ENCODE measurements at regions of chr1 and their contacts with region 1.

Region 1: GRCh38 chr1:243748706-243749283 is 101.2 kb downstream of the AKT3 start:
- DNase-seq: peak in 7 of 9 donors; percentile 11 to 59 (median 44)
- ATAC-seq: peak; percentile 99
- H3K4me3 ChIP-seq: no peak overlapping the region
- H3K4me3 Mint-ChIP-seq: no peak overlapping the region
- H3K27ac ChIP-seq: no peak overlapping the region
- H3K27ac Mint-ChIP-seq: peak overlapping the region in 6 of 9 donors; percentile 23 to 84 (median 71)
- H3K4me1 ChIP-seq: peaks cover 0 to 12% of the 10 kb centered on the region in 2 donors
- H3K4me1 Mint-ChIP-seq: peaks cover 2 to 68% (median 39%) of the 10 kb centered on the region in 7 donors
- H3K27me3 ChIP-seq: no peaks in the 10 kb centered on the region
- H3K27me3 Mint-ChIP-seq: no peaks in the 10 kb centered on the region

Region 2: DNA sequence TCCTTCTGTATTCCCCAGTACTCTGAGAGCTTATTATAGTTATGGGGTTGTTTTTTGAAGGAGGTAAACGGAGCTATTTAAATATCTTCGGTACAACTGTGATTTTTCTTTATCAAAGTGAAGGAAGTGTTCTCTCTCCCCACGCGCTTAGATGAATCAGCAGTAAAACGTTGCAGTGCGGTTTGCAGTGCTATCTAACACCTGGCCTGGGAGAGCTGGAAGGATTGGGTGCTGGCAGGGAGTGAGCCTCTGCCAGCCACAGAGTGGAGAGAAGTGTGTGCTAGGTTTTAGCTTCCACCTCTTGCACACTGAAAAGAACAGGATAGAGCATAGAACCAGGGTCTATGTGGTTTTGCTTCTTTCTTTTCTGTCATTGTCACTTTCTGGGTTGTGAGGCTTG is 327.0 kb before region 1 on chr1:
- CTCF ChIA-PET with region 1: no interaction called
- POLR2A ChIA-PET with region 1: no interaction called
- intact Hi-C with region 1: loop called in 1 of 2 experiments (anchors 5 kb)
- DNase-seq: peak in 8 of 9 donors; percentile 13 to 58 (median 39)
- ATAC-seq: peak; percentile 87
- H3K4me3 ChIP-seq: peak overlapping the region; percentile 6
- H3K4me3 Mint-ChIP-seq: peak overlapping the region; percentile 5 to 80 (median 62)
- H3K27ac ChIP-seq: no peak overlapping the region
- H3K27ac Mint-ChIP-seq: peak overlapping the region in 5 of 9 donors; percentile 1 to 81 (median 17)
- H3K4me1 ChIP-seq: peaks cover 9% of the 10 kb centered on the region in 2 donors
- H3K4me1 Mint-ChIP-seq: peaks cover 12 to 42% (median 22%) of the 10 kb centered on the region in 7 donors
- H3K27me3 ChIP-seq: no peaks in the 10 kb centered on the region
- H3K27me3 Mint-ChIP-seq: no peaks in the 10 kb centered on the region

Region 3: DNA sequence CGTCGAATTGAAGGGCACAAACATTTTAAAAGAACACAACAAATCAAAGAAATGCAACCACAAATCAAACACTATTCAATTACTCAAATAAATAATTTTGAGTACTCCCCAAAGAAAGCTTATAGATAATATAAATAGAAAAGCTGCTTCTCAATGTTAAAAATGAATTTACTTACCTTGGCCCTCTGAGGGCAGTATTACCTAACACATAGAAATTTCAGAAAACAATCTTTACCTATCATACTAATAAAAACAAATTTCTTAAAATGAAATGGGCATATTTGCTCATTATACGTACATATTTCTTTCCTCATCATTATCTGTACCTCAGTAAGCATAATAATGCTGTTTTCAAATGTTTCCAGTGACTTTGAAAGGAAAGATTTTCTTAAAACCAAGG is 40.6 kb before region 1 on chr1:
- CTCF ChIA-PET with region 1: interaction called, 3 read pairs
- POLR2A ChIA-PET with region 1: no interaction called
- intact Hi-C with region 1: loop called (anchors 2 kb)
- DNase-seq: peak in 5 of 9 donors; percentile 4 to 36 (median 15)
- ATAC-seq: no peak
- H3K4me3 ChIP-seq: no peak overlapping the region
- H3K4me3 Mint-ChIP-seq: no peak overlapping the region
- H3K27ac ChIP-seq: no peak overlapping the region
- H3K27ac Mint-ChIP-seq: no peak overlapping the region
- H3K4me1 ChIP-seq: no peaks in the 10 kb centered on the region
- H3K4me1 Mint-ChIP-seq: peaks cover 5 to 40% (median 27%) of the 10 kb centered on the region in 7 donors
- H3K27me3 ChIP-seq: no peaks in the 10 kb centered on the region
- H3K27me3 Mint-ChIP-seq: no peaks in the 10 kb centered on the region

Region 4: DNA sequence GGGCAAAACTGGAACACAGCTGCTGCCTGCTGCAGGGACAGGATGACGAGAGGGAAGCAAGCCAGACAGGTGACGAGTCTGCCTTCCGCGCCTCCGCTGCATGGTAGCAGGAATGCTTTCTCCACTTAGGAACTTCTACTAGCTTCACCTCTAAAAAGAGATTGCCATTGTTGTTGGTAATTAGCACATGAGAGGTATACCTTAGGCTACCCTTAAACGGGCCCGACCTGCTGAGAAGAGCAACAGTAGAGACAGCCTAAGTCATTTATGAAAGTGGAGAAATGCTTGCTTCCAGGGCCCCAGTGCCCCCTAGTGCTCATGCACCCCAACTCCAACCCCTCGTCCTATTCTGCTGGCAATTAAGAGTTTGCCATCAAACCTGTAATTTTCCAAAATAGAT is 198.2 kb after region 1 on chr1:
- CTCF ChIA-PET with region 1: no interaction called
- POLR2A ChIA-PET with region 1: no interaction called
- intact Hi-C with region 1: loop called in 1 of 2 experiments (anchors 1 kb)
- DNase-seq: peak in 6 of 9 donors; percentile 11 to 52 (median 38)
- ATAC-seq: peak; percentile 76
- H3K4me3 ChIP-seq: no peak overlapping the region
- H3K4me3 Mint-ChIP-seq: no peak overlapping the region
- H3K27ac ChIP-seq: no peak overlapping the region
- H3K27ac Mint-ChIP-seq: peak overlapping the region in 1 of 9 donors; percentile 17
- H3K4me1 ChIP-seq: no peaks in the 10 kb centered on the region
- H3K4me1 Mint-ChIP-seq: no peaks in the 10 kb centered on the region
- H3K27me3 ChIP-seq: no peaks in the 10 kb centered on the region
- H3K27me3 Mint-ChIP-seq: peaks cover 0 to 8% (median 5%) of the 10 kb centered on the region in 5 donors

Measured in naive thymus-derived CD4-positive, alpha-beta T cell (primary cell).